ENCODE measurements at regions of chr17 and their contacts with region 1.

Region 1: DNA sequence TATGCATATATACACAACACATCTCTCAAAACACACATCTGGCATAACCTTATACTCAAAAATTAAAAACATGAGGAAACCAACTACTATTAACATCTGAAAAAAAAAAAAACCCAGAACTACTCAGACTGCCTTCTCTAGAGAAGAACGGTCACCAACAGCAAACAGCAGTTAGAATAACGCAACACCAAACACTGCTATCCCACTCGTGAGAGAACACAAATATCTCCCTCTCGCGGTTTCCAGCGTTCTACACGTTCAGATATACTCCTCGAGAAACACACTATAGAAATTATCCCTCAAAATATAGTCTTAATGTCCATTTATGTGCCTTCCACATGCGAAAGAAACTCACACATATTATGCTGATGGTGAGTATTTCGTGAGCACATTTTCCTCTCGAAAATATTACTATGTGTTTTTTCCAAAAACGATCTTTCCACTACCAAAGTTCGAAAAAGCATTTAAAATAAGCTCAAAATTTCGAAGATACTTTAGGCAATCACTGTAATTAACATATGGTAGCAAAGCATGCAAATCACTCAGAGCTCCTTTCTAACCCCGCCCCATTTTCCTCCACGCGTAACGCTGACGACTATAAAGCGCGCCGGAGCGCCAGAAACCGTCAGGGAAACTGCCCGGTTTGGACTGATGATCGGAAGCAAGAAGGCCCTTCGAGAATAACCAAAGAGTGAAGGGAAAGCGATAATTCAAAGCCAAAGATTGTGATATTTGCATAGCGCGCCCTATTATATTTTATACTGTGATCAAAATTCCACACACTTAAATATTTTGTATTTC is 60.1 kb downstream of the TEX14 start:
- DNase-seq: peak; percentile 98
- H3K4me3 Mint-ChIP-seq: no peak overlapping the region
- H3K27ac Mint-ChIP-seq: no peak overlapping the region
- H3K4me1 Mint-ChIP-seq: peaks cover 3% of the 10 kb centered on the region
- H3K27me3 Mint-ChIP-seq: no peaks in the 10 kb centered on the region

Region 2: GRCh38 chr17:58352014-58352842 is 279.5 kb before region 1 on chr17 and contains the start of gene SUPT4H1:
- CTCF ChIA-PET with region 1: no interaction called
- POLR2A ChIA-PET with region 1: interaction called, 13 read pairs
- intact Hi-C with region 1: no loop called
- DNase-seq: peak; percentile 96
- H3K4me3 Mint-ChIP-seq: peak within 1 kb of the TSS; percentile 100
- H3K27ac Mint-ChIP-seq: peak within 1 kb of the TSS; percentile 99
- H3K4me1 Mint-ChIP-seq: peaks cover 50% of the 10 kb centered on the region
- H3K27me3 Mint-ChIP-seq: no peaks in the 10 kb centered on the region
- total RNA-seq, gene SUPT4H1: 113 to 114 TPM

Region 3: DNA sequence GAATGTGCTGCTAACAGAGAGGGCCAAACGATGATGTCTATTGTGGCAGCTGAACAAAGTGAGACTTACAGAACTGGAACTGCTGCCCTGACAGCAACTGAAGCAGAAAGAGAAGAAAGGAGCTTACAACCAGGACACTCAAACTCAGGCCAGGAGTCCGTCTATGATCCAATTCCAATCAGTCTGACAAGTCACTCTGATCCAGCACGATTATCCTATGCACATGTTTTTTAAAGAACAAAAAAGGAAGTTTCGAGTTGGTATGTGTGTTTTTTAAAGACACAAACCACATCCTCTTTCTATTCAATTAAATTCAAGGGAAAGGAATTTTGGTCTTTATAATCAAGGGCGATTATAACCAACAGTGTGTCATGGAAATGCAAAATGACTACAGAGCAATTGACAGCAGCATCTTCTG is 74.9 kb before region 1 on chr17:
- CTCF ChIA-PET with region 1: no interaction called
- POLR2A ChIA-PET with region 1: no interaction called
- intact Hi-C with region 1: no loop called
- DNase-seq: no peak
- H3K4me3 Mint-ChIP-seq: no peak overlapping the region
- H3K27ac Mint-ChIP-seq: no peak overlapping the region
- H3K4me1 Mint-ChIP-seq: peaks cover 5% of the 10 kb centered on the region
- H3K27me3 Mint-ChIP-seq: no peaks in the 10 kb centered on the region

Region 4: DNA sequence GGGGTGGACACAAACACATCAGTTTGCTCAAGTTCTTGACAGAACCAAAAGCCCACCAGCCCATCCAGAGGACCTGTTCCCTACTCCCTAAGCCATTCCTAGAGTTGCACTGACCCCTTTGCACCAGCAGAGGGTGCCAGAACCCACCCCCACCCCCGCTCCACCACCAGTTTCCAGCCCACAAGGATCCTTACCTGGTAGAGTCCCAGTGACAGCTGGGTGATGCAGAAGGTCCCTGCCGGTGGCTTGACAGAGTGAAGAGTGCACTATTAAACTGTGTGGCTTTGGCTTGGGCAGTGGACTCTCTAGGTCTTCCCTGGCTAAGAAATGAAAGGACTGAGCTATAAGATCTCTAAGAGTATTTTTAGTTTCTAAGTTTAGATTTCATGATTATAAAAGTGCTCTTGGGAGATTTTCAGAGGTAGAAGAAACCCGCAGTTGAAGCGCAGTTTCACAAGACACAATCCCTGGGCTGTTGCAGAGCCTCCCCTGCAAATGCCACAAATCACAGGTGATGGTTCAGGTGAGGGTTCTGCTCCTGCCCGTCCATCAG is 43.9 kb before region 1 on chr17:
- CTCF ChIA-PET with region 1: interaction called, 22 read pairs
- POLR2A ChIA-PET with region 1: interaction called, 31 read pairs
- intact Hi-C with region 1: loop called (anchors 10 kb)
- DNase-seq: peak; percentile 79
- H3K4me3 Mint-ChIP-seq: no peak overlapping the region
- H3K27ac Mint-ChIP-seq: no peak overlapping the region
- H3K4me1 Mint-ChIP-seq: no peaks in the 10 kb centered on the region
- H3K27me3 Mint-ChIP-seq: no peaks in the 10 kb centered on the region

Region 5: GRCh38 chr17:58621174-58621573 is 10.5 kb before region 1 on chr17:
- CTCF ChIA-PET with region 1: no interaction called
- POLR2A ChIA-PET with region 1: interaction called, 52 read pairs
- intact Hi-C with region 1: no loop called
- DNase-seq: no peak
- H3K4me3 Mint-ChIP-seq: no peak overlapping the region
- H3K27ac Mint-ChIP-seq: no peak overlapping the region
- H3K4me1 Mint-ChIP-seq: peaks cover 3% of the 10 kb centered on the region
- H3K27me3 Mint-ChIP-seq: no peaks in the 10 kb centered on the region

Region 6: DNA sequence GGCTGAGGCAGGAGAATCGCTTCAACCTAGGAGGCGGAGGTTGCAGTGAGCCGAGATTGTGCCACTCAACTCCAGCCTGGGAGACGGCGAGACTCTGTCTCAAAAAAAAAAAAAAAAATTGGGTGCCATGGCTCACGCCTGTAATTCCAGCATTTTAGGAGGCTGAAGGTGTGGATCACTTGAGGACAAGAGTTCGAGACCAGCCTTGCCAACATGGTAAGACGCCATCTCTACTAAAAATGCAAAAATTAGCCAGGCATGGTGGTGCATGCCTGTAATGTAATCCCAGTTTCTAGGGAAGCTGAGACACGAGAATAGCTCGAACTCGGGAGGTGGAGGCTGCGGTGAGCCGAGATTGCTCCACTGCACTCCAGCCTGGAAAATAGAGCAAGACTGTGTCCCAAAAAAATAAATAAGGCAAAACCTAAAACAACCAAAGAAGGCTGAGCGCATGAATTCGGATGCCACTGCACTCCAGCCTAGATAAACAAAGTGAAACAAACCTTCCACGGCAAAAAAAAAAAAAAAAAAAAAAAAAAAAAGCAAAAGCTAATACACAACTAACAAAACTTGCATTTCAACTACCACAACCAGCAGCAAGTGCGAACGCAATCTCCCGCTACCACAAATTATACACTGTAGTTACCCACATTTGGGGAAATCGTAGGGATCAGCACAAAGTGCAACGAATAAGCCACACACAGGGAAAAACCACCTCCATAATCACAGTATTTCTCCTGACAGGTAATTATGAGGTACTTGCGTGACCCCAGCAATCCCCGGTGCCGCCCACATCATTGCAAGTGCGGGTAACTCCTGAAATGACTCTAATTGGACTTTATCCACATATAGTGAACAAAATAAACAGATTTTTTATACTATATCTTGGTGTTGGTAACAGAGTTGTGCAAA is 34.5 kb after region 1 on chr17:
- CTCF ChIA-PET with region 1: interaction called, 3 read pairs
- POLR2A ChIA-PET with region 1: interaction called, 243 read pairs
- intact Hi-C with region 1: no loop called
- DNase-seq: no peak
- H3K4me3 Mint-ChIP-seq: peak overlapping the region; percentile 36
- H3K27ac Mint-ChIP-seq: no peak overlapping the region
- H3K4me1 Mint-ChIP-seq: peaks cover 9% of the 10 kb centered on the region
- H3K27me3 Mint-ChIP-seq: peaks cover 8% of the 10 kb centered on the region

Region 7: DNA sequence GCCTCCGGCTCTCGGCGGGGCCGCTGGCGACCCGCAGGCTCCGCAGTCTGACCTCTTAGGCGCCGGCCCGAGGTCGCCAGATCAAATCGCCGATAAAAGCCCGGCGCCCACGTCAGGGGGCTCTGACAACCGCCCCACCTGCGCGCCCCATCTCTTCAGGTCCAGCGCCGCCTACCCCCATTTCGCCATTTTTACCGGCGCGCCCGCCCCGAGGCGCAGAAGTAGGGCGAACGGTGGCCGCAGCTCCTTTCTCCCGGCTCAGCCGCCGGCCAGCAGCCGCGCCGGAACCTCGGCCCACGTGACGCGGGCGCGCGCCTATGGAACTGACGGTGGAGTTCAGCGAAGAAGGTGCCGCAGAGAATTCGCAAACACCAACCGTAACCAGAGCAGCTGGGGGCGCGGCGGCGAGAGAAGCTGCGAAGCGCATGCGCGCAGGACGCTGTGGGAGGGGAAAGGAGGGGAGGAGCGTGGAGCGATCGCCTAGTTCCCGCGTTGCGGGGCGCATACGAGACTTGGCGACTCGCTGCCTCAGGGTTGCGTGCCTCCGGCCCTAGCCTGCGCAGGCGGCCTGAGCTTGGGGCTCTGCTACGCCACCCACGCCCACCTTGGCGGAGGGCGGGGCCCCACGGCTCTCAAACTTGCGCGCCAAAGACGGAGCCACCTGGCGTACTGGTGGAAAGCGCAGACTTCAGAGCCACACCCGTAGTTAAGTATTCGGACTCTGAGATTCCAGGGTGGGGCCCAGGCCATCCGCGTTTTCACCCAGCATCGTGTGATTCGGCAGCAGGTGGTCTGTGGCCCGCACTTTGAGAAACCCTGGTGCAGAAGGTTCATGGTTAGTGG is 475.0 kb after region 1 on chr17 and contains the start of gene TRIM37:
- CTCF ChIA-PET with region 1: no interaction called
- POLR2A ChIA-PET with region 1: interaction called, 14 read pairs
- intact Hi-C with region 1: no loop called
- DNase-seq: peak; percentile 100
- H3K4me3 Mint-ChIP-seq: peak within 1 kb of the TSS; percentile 98
- H3K27ac Mint-ChIP-seq: peak within 1 kb of the TSS; percentile 94
- H3K4me1 Mint-ChIP-seq: peaks cover 47% of the 10 kb centered on the region
- H3K27me3 Mint-ChIP-seq: no peaks in the 10 kb centered on the region
- total RNA-seq, gene TRIM37: 21.4 to 27.3 TPM

Measured in activated CD4-positive, alpha-beta memory T cell treated with anti-CD3 and anti-CD28 coated beads for 36 hours (primary cell).